ENCODE measurements at regions of chr1 and their contacts with region 1.

Region 1: DNA sequence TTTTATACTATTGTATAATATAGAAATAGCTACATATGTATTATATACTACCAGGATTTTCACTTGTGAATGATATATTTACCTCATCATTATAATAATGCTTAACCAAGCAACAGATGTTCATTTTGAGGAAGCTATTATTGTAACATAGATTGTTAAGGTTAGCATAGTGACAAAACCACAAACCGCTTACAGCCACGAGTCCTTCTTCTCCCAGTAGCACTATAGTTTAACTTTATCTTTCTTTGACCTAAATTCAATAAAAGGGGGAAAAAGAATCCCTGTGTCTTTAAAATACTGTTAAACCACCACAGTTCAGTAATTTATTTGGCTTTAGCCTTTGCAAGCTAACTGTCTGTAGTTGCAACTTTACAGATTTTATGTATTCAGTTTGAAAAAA is 1039.4 kb upstream of the B3GALT2 start:
- DNase-seq: peak; percentile 86
- H3K4me3 ChIP-seq: peak overlapping the region; percentile 56
- H3K27ac ChIP-seq: peak overlapping the region; percentile 99
- H3K4me1 ChIP-seq: peaks cover 49% of the 10 kb centered on the region
- CTCF ChIP-seq: no peak

Region 2: GRCh38 chr1:192639607-192640368 is 1586.0 kb before region 1 on chr1:
- CTCF ChIA-PET with region 1: no interaction called
- POLR2A ChIA-PET with region 1: no interaction called
- intact Hi-C with region 1: loop called (anchors 10 kb)
- DNase-seq: peak; percentile 42
- H3K4me3 ChIP-seq: peak overlapping the region; percentile 80
- H3K27ac ChIP-seq: peak overlapping the region; percentile 100
- H3K4me1 ChIP-seq: peaks cover 42% of the 10 kb centered on the region
- CTCF ChIP-seq: no peak

Region 3: DNA sequence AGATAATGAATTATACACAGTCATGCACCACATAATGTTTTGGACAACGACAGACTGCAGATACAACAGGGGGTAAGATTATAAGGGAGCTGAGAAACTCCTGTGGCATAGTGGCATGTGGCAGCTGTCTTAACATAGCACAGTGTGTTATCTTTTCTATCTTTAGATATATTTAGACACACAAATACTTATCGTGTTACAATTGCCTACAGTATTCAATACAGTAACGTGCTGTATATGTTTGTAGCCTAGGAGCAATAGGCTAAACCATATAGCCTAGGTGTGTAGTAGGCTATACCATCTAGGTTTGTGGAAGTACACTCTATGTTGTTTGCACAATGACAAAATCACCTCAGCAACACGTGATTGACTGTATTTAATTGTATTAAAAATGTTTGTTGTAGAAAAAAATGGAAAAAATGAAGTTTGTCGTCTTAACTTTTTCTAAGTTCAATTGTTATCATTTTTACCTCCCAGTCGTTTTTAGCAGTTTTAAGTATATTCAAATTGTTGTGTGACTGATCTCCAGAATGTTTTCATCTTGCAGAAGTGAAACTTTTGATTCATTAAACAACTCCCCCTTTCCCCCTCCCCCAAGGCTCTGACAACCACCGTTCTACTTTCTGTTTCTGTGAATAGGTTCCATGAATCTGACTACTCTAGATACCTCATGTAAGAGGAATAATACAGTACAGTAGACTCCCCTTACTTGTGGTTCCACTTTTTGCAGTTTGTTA is 688.4 kb before region 1 on chr1:
- CTCF ChIA-PET with region 1: no interaction called
- POLR2A ChIA-PET with region 1: no interaction called
- intact Hi-C with region 1: loop called (anchors 1 kb)
- DNase-seq: peak; percentile 90
- H3K4me3 ChIP-seq: peak overlapping the region; percentile 53
- H3K27ac ChIP-seq: peak overlapping the region; percentile 78
- H3K4me1 ChIP-seq: peaks cover 50% of the 10 kb centered on the region
- CTCF ChIP-seq: no peak

Region 4: GRCh38 chr1:194102606-194103005 is 123.2 kb before region 1 on chr1:
- CTCF ChIA-PET with region 1: no interaction called
- POLR2A ChIA-PET with region 1: no interaction called
- intact Hi-C with region 1: no loop called
- DNase-seq: peak; percentile 61
- H3K4me3 ChIP-seq: no peak overlapping the region
- H3K27ac ChIP-seq: no peak overlapping the region
- H3K4me1 ChIP-seq: no peaks in the 10 kb centered on the region
- CTCF ChIP-seq: peak; percentile 75

Region 5: DNA sequence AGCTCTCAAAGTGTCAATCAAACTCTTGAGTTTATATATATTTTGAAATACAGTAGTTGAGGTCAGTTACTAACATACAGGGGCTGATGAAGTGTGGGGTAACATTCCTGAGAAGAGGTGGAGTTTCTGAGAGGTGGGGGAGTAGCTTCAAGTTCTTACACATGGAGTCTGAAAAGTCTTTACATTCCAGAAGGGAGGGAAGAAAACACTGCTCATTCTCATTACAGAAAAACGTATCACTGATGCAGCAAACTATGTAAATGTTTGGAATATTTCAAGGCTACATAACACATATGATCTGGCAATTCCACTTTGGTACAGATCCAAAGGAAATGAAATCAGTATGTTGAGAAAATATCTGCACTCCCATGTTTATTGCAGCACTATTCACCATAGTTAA is 26.4 kb after region 1 on chr1:
- CTCF ChIA-PET with region 1: interaction called, 3 read pairs
- POLR2A ChIA-PET with region 1: interaction called, 19 read pairs
- intact Hi-C with region 1: no loop called
- DNase-seq: no peak
- H3K4me3 ChIP-seq: no peak overlapping the region
- H3K27ac ChIP-seq: no peak overlapping the region
- H3K4me1 ChIP-seq: peaks cover 11% of the 10 kb centered on the region
- CTCF ChIP-seq: no peak

Region 6: DNA sequence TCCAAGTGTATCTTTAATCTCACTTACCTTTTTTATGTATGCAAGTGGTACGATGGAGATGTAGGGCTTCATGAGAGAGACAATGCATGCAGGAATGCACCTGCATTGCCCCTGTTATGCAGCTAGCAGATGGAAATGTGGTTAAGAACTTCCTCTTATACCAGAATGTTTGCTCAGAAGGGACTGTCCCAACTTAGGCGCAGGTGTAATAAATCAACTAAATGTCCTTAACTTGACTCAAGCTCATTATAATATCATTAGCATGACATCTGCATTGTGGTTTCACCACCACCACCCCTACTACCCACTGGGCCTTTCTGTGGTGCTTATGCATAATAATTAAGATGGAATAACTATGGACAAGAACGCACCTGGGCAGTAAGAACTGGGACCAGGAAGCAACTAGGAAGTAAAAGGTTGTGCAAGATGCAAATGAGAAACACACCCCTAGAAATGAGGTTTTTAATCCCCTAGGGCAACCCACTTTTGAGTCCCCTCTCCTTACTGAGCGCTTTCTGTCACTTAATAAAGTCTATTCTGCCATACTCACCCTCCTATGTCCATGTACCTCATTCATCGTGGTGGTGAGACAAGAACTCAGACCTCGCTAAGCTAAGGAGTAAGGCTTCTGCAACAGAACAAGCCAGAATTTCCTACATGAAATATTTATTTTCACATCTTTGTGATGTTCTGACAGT is 63.9 kb after region 1 on chr1:
- CTCF ChIA-PET with region 1: no interaction called
- POLR2A ChIA-PET with region 1: interaction called, 26 read pairs
- intact Hi-C with region 1: loop called (anchors 1 kb)
- DNase-seq: peak; percentile 98
- H3K4me3 ChIP-seq: peak overlapping the region; percentile 73
- H3K27ac ChIP-seq: peak overlapping the region; percentile 96
- H3K4me1 ChIP-seq: peaks cover 48% of the 10 kb centered on the region
- CTCF ChIP-seq: no peak

Region 7: DNA sequence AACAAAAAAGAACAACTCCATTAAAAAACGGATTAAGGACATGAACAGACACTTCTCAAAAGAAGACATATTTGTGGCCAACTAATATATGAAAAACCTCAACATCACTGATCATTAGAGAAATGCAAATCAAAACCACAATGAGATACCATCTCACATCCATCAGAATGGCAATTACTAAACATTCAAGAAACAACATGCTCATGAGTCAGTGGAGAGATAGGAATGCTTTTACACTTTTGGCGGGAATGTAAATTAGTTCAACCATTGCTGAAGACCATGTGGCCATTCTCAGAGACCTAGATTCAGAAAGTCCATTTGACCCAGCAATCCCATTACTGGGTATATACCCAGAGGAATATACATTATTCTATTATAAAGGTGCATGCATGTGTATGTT is 403.2 kb after region 1 on chr1:
- CTCF ChIA-PET with region 1: no interaction called
- POLR2A ChIA-PET with region 1: no interaction called
- intact Hi-C with region 1: no loop called
- DNase-seq: no peak
- H3K4me3 ChIP-seq: no peak overlapping the region
- H3K27ac ChIP-seq: no peak overlapping the region
- H3K4me1 ChIP-seq: no peaks in the 10 kb centered on the region
- CTCF ChIP-seq: no peak

Region 8: DNA sequence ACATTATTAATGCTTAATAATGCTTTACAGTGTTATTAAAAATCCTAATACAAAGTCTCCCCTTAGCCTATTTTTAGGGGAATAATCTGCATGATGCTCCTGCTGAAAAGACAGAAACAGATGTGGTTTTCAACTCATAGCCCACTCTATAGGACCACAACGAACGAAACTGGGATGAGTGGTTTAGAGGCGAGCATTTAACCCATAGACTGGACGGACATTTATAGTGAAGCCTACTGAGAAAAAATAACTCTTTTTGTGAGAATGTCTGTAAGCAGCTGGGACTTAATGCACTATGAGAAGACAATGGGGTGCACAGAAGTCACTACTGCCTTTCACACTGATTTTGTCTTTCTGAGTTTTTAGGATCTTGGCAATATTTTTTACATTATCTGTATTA is 560.2 kb after region 1 on chr1:
- CTCF ChIA-PET with region 1: no interaction called
- POLR2A ChIA-PET with region 1: no interaction called
- intact Hi-C with region 1: no loop called
- DNase-seq: no peak
- H3K4me3 ChIP-seq: no peak overlapping the region
- H3K27ac ChIP-seq: no peak overlapping the region
- H3K4me1 ChIP-seq: no peaks in the 10 kb centered on the region
- CTCF ChIP-seq: no peak

Measured in OCI-LY7 (cell line).